HCT116 (cell line): ENCODE measurements at regions of chr1 and their contacts with region 1.

Region 1: DNA sequence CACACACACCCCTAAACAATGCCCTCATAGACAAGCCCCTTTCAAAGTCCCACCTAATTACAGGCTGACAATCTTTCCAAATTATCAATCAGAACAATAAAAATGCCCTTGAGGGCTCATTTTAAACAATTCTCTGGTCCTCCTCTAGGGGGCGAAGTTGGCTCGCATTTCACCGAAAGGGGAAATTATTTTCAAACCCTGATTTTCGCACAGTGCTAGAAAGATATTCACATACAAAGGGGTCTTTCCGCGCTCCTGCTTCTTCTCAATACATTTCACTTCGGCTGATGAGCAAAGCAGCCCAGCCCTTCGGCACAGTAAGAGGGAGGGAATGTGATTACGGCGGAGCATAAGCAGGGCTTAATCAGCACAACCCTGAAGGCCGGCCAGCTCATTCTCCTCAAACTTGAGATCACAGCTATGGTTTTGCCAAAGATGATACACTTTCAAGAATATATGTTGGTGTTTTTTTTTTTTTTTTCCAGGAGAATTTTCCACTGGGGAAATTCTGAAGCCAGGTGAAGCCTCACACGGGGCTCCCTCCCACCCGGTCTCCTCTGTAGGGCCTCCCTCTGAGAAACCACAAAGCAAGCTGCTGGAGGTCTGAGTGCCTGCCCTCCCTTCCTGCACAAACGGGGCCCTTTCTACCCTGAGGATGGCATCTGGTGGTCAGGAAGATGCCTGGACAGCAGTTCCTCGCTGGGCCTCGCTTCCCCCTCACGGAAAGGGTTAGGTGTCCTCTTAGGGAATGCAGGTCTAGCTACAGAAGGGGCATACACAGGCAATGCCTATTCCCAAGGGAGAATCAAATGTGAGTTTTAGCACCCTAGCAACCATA is 66.9 kb downstream of the GNG12 start:
- DNase-seq: no peak
- ATAC-seq: peak; percentile 52; the same call in 1 of the 2 replicates
- H3K4me3 ChIP-seq: no peak overlapping the region
- H3K27ac ChIP-seq: no peak overlapping the region
- H3K4me1 ChIP-seq: no peaks in the 10 kb centered on the region
- H3K27me3 ChIP-seq: no peaks in the 10 kb centered on the region
- CTCF ChIP-seq: peak; percentile 60 to 88 (median 68)
- POLR2A ChIP-seq: no peak
- RAD21 ChIP-seq: peak; percentile 82

Region 2: GRCh38 chr1:67780637-67781036 is 14.3 kb after region 1 on chr1:
- CTCF ChIA-PET with region 1: no interaction called
- POLR2A ChIA-PET with region 1: no interaction called
- RAD21 ChIA-PET with region 1: no interaction called
- intact Hi-C with region 1: no loop called
- DNase-seq: no peak
- ATAC-seq: no peak
- H3K4me3 ChIP-seq: no peak overlapping the region
- H3K27ac ChIP-seq: no peak overlapping the region
- H3K4me1 ChIP-seq: no peaks in the 10 kb centered on the region
- H3K27me3 ChIP-seq: no peaks in the 10 kb centered on the region
- CTCF ChIP-seq: no peak
- POLR2A ChIP-seq: no peak
- RAD21 ChIP-seq: no peak

Region 3: DNA sequence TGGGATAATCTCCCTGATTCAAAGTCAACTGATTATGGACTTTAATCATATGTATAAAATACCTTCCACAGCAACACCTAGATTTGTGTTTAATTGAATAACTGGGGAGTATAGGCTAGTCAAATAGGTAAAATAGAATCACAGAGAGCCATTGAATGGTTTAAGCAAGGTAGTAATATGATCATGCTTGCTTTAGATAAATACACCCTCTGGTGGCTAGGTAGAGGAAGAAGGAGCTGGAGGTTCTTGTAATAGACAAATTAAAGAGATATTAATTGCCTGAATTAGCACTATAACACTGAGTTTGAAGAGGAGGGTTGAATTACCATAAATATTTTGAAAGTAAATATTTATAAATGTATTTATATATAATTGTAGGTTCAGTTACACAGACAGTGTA is 243.7 kb after region 1 on chr1:
- CTCF ChIA-PET with region 1: interaction called, 19 read pairs
- POLR2A ChIA-PET with region 1: no interaction called
- RAD21 ChIA-PET with region 1: interaction called in 1 of 2 experiments, 3 read pairs
- intact Hi-C with region 1: loop called (anchors 5 kb)
- DNase-seq: peak; percentile 8
- ATAC-seq: peak; percentile 71
- H3K4me3 ChIP-seq: no peak overlapping the region
- H3K27ac ChIP-seq: no peak overlapping the region
- H3K4me1 ChIP-seq: no peaks in the 10 kb centered on the region
- H3K27me3 ChIP-seq: no peaks in the 10 kb centered on the region
- CTCF ChIP-seq: peak; percentile 35 to 73 (median 48); a peak in 4 of 6 replicates
- POLR2A ChIP-seq: no peak
- RAD21 ChIP-seq: peak; percentile 85

Region 4: DNA sequence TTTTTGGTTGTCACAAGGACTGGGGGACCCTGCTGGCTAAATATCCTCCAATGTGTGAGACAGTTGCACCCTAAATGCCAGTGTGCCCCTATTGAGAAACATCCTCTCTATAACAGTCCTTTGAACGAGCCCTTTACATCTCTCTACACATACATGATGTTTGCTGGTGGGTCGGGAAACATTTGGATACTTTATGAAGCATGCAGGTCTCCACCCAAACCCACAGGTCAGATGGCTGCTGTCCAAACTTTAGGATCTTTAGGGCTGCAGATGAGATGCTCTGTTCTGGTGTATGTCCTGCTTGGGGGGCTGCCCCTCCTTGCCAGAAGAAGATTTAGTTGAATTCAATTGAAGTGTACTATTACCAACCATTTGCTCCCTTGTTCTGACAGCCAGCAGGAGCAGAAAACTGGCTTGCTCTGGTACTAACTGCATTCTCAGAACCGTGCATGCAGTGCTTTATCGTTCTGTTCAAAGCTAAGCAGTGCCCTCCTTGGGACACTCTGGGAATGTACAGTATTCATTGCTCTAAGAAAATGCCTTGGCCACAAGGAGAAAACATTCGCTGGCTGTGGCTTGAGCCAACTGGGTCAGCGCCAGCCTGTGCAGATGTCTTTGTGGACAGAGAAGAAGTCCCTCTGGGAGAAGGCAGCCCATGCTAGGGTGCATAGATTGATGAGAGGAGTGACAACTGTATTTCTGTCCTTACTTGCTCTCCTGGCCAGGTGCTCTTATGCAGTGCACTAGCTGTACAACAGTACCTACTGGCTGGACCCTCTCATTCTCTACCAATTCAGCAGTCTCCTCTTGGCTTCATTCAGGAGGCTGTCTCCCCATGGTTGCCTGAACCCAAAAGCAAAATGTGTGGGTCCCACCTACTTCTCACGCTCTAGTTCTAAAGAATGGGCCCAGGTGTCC is 345.4 kb after region 1 on chr1:
- CTCF ChIA-PET with region 1: interaction called, 11 read pairs
- POLR2A ChIA-PET with region 1: no interaction called
- RAD21 ChIA-PET with region 1: no interaction called
- intact Hi-C with region 1: loop called (anchors 5 kb)
- DNase-seq: peak; percentile 45
- ATAC-seq: peak; percentile 84
- H3K4me3 ChIP-seq: no peak overlapping the region
- H3K27ac ChIP-seq: no peak overlapping the region
- H3K4me1 ChIP-seq: peaks cover 0 to 27% of the 10 kb centered on the region in 2 experiments; a peak in 2 of 4 replicates
- H3K27me3 ChIP-seq: no peaks in the 10 kb centered on the region
- CTCF ChIP-seq: peak; percentile 54 to 84 (median 67)
- POLR2A ChIP-seq: no peak
- RAD21 ChIP-seq: peak; percentile 92